ENCODE measurements at regions of chrX and their contacts with region 1.

Region 1: DNA sequence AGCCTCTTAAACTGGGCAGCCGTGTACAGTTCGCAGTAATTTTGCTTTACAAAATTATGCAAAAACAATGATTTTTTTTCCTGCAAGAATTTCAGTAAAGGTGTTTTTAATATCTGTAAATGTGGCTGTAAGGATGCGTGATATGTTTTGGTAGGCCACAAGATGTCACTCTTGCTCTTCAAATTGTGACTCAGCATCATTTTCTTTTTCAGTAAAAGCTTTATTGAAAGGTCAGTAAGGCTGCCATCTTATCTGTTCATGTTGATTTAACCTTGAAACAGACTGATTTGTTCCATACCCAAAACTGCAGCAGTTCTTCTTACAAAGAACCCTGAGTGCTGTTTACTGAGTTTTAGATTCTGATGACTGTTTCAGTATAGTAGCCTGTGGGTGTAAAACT is 39.9 kb downstream of the TXLNG start:
- DNase-seq: no peak
- H3K4me3 ChIP-seq: no peak overlapping the region
- H3K27ac ChIP-seq: peak overlapping the region; percentile 90
- H3K4me1 ChIP-seq: peaks cover 52% of the 10 kb centered on the region
- H3K27me3 ChIP-seq: no peaks in the 10 kb centered on the region
- CTCF ChIP-seq: peak in 2 of 3 experiments; percentile 23 to 55

Region 2: GRCh38 chrX:17053502-17053901 is 227.3 kb after region 1 on chrX:
- dilution Hi-C with region 1: loop called (anchors 25 kb)
- DNase-seq: no peak
- H3K4me3 ChIP-seq: no peak overlapping the region
- H3K27ac ChIP-seq: no peak overlapping the region
- H3K4me1 ChIP-seq: peaks cover 20% of the 10 kb centered on the region
- H3K27me3 ChIP-seq: no peaks in the 10 kb centered on the region
- CTCF ChIP-seq: no peak

Region 3: GRCh38 chrX:17104433-17104832 is 278.2 kb after region 1 on chrX:
- dilution Hi-C with region 1: no loop called
- DNase-seq: no peak
- H3K4me3 ChIP-seq: no peak overlapping the region
- H3K27ac ChIP-seq: no peak overlapping the region
- H3K4me1 ChIP-seq: no peaks in the 10 kb centered on the region
- H3K27me3 ChIP-seq: peaks cover 5% of the 10 kb centered on the region
- CTCF ChIP-seq: no peak